H1 (cell line): ENCODE measurements at regions of chr12 and their contacts with region 1.

Region 1: DNA sequence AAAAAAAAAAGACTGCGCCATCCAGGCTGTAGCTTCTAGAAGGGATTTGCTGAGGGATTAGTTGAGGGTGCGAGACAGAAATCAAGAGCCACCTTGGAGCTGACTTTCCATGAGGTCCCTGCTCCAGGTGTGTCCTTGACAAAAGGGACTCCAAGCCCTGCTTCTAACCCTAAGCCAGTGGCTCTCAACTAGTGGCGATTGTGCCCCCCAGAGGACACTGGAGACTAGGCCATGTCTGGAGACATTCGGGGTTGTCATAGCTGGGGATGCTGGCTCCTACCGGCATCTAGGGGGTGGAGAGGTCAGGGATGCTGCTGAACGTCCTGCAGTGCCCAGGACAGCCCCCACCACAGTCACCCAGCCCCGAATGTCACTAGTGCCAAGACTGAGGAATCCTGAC is 40.6 kb downstream of the SPRING1 start:
- DNase-seq: no peak
- H3K4me3 ChIP-seq: no peak overlapping the region
- H3K27ac ChIP-seq: no peak overlapping the region
- H3K4me1 ChIP-seq: peaks cover 0 to 10% (median 4%) of the 10 kb centered on the region in 4 experiments; a peak in 5 of 7 replicates
- H3K27me3 ChIP-seq: peaks cover 0 to 10% (median 6%) of the 10 kb centered on the region in 4 experiments; a peak in 6 of 7 replicates
- CTCF ChIP-seq: peak; percentile 67 to 80 (median 73)
- EP300 ChIP-seq: no peak
- POLR2A ChIP-seq: no peak
- RAD21 ChIP-seq: peak; percentile 80 to 89

Region 2: GRCh38 chr12:116642683-116643082 is 54.6 kb before region 1 on chr12:
- CTCF ChIA-PET with region 1: no interaction called
- POLR2A ChIA-PET with region 1: no interaction called
- DNase-seq: no peak
- H3K4me3 ChIP-seq: no peak overlapping the region
- H3K27ac ChIP-seq: no peak overlapping the region
- H3K4me1 ChIP-seq: peaks cover 0 to 8% (median 6%) of the 10 kb centered on the region in 4 experiments; a peak in 3 of 7 replicates
- H3K27me3 ChIP-seq: no peaks in the 10 kb centered on the region
- CTCF ChIP-seq: no peak
- EP300 ChIP-seq: no peak
- POLR2A ChIP-seq: no peak
- RAD21 ChIP-seq: no peak

Region 3: DNA sequence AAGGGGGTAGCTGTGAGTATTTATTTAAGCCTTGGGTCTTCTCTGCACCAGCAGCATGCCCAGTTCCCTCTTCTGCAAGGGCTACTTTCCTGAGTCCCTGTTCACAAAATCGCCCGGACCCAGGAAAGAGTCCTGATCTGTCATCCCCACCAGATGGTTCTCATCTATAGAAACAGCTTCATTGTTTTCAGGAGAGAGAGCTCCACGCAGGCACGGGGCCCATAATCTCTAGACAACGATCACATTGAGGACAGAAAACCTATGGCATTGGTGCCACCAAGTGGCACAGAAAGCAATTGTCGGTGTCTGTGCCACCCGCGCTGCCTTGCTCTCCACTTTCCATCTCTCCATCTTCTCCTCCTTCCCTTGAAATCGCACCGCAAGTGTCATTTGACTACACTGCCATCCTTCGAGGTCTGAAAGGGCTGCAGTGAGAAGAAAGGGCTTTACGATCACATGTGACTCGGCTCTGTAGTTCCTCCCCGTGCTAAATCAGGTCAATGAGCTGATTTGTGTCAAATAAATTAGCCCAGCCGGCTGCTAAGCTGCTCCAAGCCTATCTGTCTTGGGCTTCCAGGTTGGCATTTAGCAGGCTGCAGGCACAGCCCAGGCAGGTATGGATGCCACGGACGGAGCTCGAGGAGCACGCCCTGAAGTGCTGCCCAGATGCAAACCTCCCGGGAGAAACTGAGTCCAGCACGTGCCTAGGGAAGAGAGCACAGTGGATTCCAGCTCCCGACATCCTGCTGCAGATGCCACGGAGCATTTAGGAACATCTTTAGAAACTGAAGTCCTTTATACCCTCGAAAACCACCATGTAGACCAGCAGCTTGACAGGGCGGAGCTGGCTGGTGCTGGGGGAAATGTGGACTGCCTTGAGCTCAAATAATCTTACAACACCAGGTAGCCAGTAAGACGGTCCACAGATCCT is 11.8 kb after region 1 on chr12:
- CTCF ChIA-PET with region 1: interaction called, 13 read pairs
- POLR2A ChIA-PET with region 1: no interaction called
- DNase-seq: no peak
- H3K4me3 ChIP-seq: no peak overlapping the region
- H3K27ac ChIP-seq: no peak overlapping the region
- H3K4me1 ChIP-seq: peaks cover 0 to 4% (median 2%) of the 10 kb centered on the region in 4 experiments; a peak in 1 of 7 replicates
- H3K27me3 ChIP-seq: no peaks in the 10 kb centered on the region; a peak in 1 of 7 replicates
- CTCF ChIP-seq: peak; percentile 46 to 67 (median 52)
- EP300 ChIP-seq: no peak
- POLR2A ChIP-seq: no peak
- RAD21 ChIP-seq: peak; percentile 74